Mammary epithelial cell (primary cell): ENCODE measurements at regions of chr16 and their contacts with region 1.

Region 1: GRCh38 chr16:89490387-89491237 is at the start of gene ANKRD11:
- DNase-seq: peak; percentile 100
- H3K4me3 ChIP-seq: peak within 1 kb of the TSS; percentile 83 to 89 (median 89)
- H3K27ac ChIP-seq: peak within 1 kb of the TSS; percentile 78
- H3K4me1 ChIP-seq: peaks cover 22% of the 10 kb centered on the region
- H3K27me3 ChIP-seq: no peaks in the 10 kb centered on the region
- CTCF ChIP-seq: no peak
- total RNA-seq, gene ANKRD11: 97.4 to 224 TPM

Region 2: GRCh38 chr16:89319883-89320781 is 170.5 kb before region 1 on chr16:
- CTCF ChIA-PET with region 1: no interaction called
- dilution Hi-C with region 1: no loop called
- in situ Hi-C with region 1: no loop called
- intact Hi-C with region 1: loop called (anchors 1 kb)
- DNase-seq: peak; percentile 91
- H3K4me3 ChIP-seq: peak overlapping the region in 2 of 3 experiments; percentile 6 to 37
- H3K27ac ChIP-seq: peak overlapping the region; percentile 69
- H3K4me1 ChIP-seq: peaks cover 90% of the 10 kb centered on the region
- H3K27me3 ChIP-seq: no peaks in the 10 kb centered on the region
- CTCF ChIP-seq: no peak

Region 3: DNA sequence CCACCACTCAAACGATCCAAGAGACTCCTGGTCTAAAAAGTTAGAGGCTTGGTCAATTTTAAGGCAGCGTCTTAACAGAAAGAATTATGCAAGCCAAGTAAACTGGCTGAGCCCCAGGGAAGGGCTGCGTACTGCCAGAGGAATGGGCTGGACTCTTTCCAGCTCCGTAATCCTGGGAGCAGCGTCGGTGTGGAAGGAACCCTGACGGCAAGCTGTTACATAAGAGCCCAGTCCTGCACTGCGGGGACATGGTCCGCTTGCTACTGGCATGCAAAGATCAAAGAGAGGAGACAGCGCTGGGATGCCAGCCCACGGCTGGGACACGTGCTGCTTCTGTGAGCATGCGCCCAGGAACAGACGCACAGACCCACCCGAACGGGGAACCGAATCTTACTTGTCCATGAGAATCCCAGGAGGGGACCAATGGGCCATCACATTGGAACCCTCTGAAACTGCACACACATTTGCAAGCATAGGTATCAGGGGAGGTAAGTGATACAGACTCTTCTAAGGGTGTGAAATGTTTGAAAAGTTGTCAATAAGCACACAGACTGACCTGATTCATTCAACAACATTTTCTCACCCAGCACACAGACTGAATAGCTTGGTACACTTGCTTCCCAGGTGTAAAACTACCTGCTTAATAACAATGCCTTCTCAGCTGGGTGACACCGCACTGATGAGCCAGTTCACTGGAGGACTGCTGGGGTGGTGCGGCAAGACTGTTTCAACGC is 95.3 kb before region 1 on chr16:
- CTCF ChIA-PET with region 1: no interaction called
- dilution Hi-C with region 1: no loop called
- in situ Hi-C with region 1: no loop called
- intact Hi-C with region 1: loop called (anchors 2 kb)
- DNase-seq: peak; percentile 88
- H3K4me3 ChIP-seq: no peak overlapping the region
- H3K27ac ChIP-seq: peak overlapping the region; percentile 43
- H3K4me1 ChIP-seq: peaks cover 47% of the 10 kb centered on the region
- H3K27me3 ChIP-seq: no peaks in the 10 kb centered on the region
- CTCF ChIP-seq: no peak

Region 4: DNA sequence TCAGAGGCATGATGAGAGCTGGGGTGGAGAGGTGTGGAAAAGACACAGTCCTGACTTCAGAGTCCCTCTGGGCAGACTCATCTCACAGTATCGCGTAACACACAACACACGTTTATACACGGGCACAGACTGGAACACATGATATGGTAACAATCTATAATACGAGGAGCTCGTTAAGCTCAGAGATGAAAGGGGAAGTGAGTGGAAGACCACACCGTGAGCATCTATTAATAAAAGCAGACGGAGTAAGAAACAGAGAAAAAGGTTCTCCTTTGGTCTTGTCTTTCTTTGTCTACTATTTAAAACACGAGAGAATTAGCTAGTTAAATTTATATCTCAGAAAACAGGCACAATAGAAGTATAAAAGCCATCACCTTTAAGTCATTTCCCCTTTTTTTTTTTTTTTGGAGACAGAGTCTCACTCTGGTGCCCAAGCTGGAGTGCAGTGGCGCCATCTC is 13.8 kb before region 1 on chr16:
- CTCF ChIA-PET with region 1: no interaction called
- dilution Hi-C with region 1: no loop called
- in situ Hi-C with region 1: no loop called
- intact Hi-C with region 1: loop called (anchors 1 kb)
- DNase-seq: no peak
- H3K4me3 ChIP-seq: peak overlapping the region in 1 of 3 experiments; percentile 27
- H3K27ac ChIP-seq: peak overlapping the region; percentile 93
- H3K4me1 ChIP-seq: peaks cover 86% of the 10 kb centered on the region
- H3K27me3 ChIP-seq: no peaks in the 10 kb centered on the region
- CTCF ChIP-seq: no peak

Region 5: DNA sequence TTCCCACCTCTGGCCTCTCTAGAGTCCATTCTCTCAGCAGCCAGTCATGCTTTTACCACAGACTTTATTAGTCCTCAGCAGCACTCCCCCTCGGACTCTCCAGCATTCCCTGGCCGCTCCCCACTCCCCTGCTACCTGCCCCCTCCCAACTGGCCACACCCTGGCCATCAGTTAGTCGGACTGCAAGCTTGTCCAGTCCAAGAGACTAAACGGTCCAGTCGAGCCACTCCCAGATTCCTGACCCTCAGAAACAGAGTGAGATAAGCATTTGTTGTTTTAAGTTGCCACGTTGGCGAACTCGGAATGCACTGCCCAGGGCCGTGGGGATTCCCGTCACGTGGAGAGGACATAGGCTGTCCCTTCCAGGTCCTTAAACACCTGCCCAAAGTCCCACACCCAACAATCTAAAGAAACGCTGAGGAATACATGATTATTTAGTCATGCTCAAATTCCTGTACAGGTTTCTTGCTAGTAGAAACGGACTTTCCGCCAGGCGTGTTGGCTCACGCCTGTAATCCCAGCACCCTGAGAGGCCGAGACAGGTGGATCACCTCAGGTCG is 11.8 kb after region 1 on chr16:
- CTCF ChIA-PET with region 1: no interaction called
- dilution Hi-C with region 1: no loop called
- in situ Hi-C with region 1: no loop called
- intact Hi-C with region 1: loop called (anchors 1 kb)
- DNase-seq: peak; percentile 95
- H3K4me3 ChIP-seq: no peak overlapping the region
- H3K27ac ChIP-seq: peak overlapping the region; percentile 42
- H3K4me1 ChIP-seq: peaks cover 28% of the 10 kb centered on the region
- H3K27me3 ChIP-seq: no peaks in the 10 kb centered on the region
- CTCF ChIP-seq: no peak

Region 6: DNA sequence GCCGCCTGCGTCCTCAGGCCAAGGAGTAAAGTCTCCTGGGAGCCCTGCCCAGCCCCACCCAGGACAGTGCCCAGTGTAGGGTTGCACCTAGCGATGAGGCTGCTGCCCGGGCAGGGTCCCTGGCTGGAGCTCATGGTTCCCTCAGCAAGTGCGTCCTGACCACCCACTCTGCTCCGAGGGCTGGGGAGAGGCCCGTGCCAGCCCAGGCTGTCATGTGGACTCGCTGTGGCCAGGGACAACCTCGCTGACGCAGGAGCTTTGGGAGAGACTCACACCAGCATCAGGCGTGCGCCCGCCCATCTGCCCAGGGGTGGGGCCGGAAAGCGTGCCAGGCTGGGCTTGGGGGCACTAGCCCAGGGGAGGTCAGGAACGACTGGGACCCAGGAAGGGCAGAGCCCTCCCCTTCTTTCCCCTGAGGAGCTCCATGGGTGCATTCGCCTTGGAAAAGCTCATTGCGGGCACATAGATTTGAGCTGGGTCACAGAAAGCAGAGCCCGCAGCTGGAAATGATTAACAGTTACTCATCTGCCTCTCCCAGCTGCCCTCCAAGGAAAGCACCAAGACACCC is 142.5 kb after region 1 on chr16:
- CTCF ChIA-PET with region 1: no interaction called
- dilution Hi-C with region 1: no loop called
- in situ Hi-C with region 1: no loop called
- intact Hi-C with region 1: no loop called
- DNase-seq: peak; percentile 85
- H3K4me3 ChIP-seq: no peak overlapping the region
- H3K27ac ChIP-seq: no peak overlapping the region
- H3K4me1 ChIP-seq: peaks cover 16% of the 10 kb centered on the region
- H3K27me3 ChIP-seq: peaks cover 1% of the 10 kb centered on the region
- CTCF ChIP-seq: no peak